H1 (cell line): ENCODE measurements at regions of chr1 and their contacts with region 1.

Region 1: GRCh38 chr1:209207701-209208286 is 375.7 kb upstream of the CAMK1G start:
- DNase-seq: peak; percentile 62 to 82
- H3K4me3 ChIP-seq: peak overlapping the region; percentile 24 to 61 (median 50); a peak in 6 of 8 replicates
- H3K27ac ChIP-seq: no peak overlapping the region
- H3K4me1 ChIP-seq: peaks cover 0 to 10% (median 5%) of the 10 kb centered on the region in 4 experiments; a peak in 6 of 7 replicates
- H3K27me3 ChIP-seq: peaks cover 0 to 7% (median 3%) of the 10 kb centered on the region in 4 experiments; a peak in 3 of 7 replicates
- CTCF ChIP-seq: peak; percentile 83 to 91 (median 89)
- EP300 ChIP-seq: no peak
- POLR2A ChIP-seq: no peak
- RAD21 ChIP-seq: peak; percentile 96

Region 2: DNA sequence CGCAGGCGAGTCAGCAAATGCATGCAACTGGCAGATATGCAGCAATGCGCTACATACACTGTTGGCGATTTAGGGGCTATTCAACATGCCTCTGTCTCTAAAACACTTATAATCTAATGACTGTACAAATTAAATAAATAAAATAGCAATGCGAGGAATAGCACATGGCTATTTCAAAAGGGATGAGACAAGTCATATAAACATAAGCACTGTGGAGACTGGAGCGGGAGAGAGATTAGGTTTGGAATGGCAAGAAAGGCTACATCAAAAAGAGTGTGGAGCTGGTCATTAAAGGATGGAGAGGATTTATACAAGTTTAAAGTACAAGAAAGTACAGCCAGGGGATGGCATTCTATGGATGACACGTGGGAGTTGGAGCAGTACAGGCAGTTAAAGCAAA is 147.8 kb before region 1 on chr1:
- CTCF ChIA-PET with region 1: interaction called, 13 read pairs
- POLR2A ChIA-PET with region 1: no interaction called
- DNase-seq: no peak
- H3K4me3 ChIP-seq: no peak overlapping the region
- H3K27ac ChIP-seq: no peak overlapping the region
- H3K4me1 ChIP-seq: peaks cover 0 to 4% (median 2%) of the 10 kb centered on the region in 4 experiments; a peak in 3 of 7 replicates
- H3K27me3 ChIP-seq: no peaks in the 10 kb centered on the region
- CTCF ChIP-seq: no peak
- EP300 ChIP-seq: no peak
- POLR2A ChIP-seq: no peak
- RAD21 ChIP-seq: no peak

Region 3: GRCh38 chr1:209095627-209096595 is 111.9 kb before region 1 on chr1:
- CTCF ChIA-PET with region 1: interaction called, 17 read pairs
- POLR2A ChIA-PET with region 1: no interaction called
- DNase-seq: no peak
- H3K4me3 ChIP-seq: no peak overlapping the region
- H3K27ac ChIP-seq: no peak overlapping the region
- H3K4me1 ChIP-seq: no peaks in the 10 kb centered on the region
- H3K27me3 ChIP-seq: peaks cover 0 to 1% (median 0%) of the 10 kb centered on the region in 4 experiments; a peak in 1 of 7 replicates
- CTCF ChIP-seq: no peak
- EP300 ChIP-seq: no peak
- POLR2A ChIP-seq: no peak
- RAD21 ChIP-seq: no peak

Region 4: DNA sequence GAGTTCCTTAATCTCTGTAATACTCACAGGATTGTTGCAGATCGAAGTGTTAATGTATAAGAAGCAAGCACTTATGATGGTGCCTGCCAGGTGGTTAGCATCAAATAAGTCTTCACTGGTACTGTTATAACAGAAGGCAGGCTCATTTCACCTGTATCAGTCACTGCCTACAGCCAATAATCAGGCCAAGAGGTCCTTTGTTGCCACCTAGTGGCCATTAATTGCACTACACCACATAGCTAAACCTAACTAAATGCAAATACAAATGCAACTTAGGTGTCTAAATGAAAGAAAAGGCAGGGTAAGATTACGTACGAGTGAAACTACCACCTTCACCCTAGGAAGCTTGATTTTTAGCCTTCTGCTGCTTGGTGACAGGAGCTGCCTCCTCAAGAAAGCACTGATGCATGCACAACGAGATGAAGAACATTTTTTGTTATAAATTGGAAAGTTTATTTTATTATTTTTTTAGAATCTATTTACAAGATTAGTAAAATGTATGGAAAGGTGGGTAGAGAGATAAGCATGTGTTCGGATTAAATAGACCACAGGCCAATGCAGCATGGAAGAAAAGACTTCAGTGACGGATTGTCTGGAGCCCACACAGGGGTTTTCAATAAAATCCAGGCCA is 41.0 kb after region 1 on chr1:
- CTCF ChIA-PET with region 1: interaction called, 70 read pairs
- POLR2A ChIA-PET with region 1: no interaction called
- DNase-seq: peak in 1 of 2 experiments; percentile 83
- H3K4me3 ChIP-seq: no peak overlapping the region
- H3K27ac ChIP-seq: no peak overlapping the region
- H3K4me1 ChIP-seq: peaks cover 0 to 16% (median 5%) of the 10 kb centered on the region in 4 experiments; a peak in 4 of 7 replicates
- H3K27me3 ChIP-seq: no peaks in the 10 kb centered on the region
- CTCF ChIP-seq: peak in 2 of 3 experiments; percentile 83 to 90; a peak in 3 of 4 replicates
- EP300 ChIP-seq: no peak
- POLR2A ChIP-seq: no peak
- RAD21 ChIP-seq: peak; percentile 86 to 91

Region 5: GRCh38 chr1:209435654-209436566 is 228.1 kb after region 1 on chr1:
- CTCF ChIA-PET with region 1: interaction called, 11 read pairs
- POLR2A ChIA-PET with region 1: no interaction called
- DNase-seq: peak; percentile 75 to 97
- H3K4me3 ChIP-seq: no peak overlapping the region
- H3K27ac ChIP-seq: no peak overlapping the region
- H3K4me1 ChIP-seq: peaks cover 8 to 29% (median 25%) of the 10 kb centered on the region in 4 experiments
- H3K27me3 ChIP-seq: no peaks in the 10 kb centered on the region
- CTCF ChIP-seq: peak; percentile 92 to 93 (median 93)
- EP300 ChIP-seq: 0 out of 3 replicates have a peak, but pooled peaks of 1 of the 2 experiments have one; percentile 14
- POLR2A ChIP-seq: no peak
- RAD21 ChIP-seq: peak; percentile 99

Region 6: DNA sequence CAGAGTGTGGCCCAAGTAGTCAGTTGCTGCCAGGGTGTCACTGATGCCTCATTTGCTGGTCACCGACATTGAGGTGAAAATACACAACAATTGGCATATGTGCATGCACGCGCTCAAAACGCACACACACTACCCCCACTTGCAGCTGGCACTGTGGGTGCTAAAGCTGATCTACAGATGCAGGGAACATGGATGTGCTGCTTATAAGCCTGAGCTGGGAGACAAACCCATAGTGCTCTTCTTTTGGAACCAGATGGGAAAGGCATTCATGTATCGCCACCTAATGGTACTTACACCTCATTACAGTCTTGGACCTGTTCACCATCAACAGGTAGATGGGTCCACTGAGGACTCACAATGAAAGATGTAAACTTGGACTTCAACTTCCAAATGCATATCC is 305.4 kb after region 1 on chr1:
- CTCF ChIA-PET with region 1: interaction called, 16 read pairs
- POLR2A ChIA-PET with region 1: no interaction called
- DNase-seq: peak in 1 of 2 experiments; percentile 50
- H3K4me3 ChIP-seq: no peak overlapping the region
- H3K27ac ChIP-seq: no peak overlapping the region
- H3K4me1 ChIP-seq: no peaks in the 10 kb centered on the region
- H3K27me3 ChIP-seq: no peaks in the 10 kb centered on the region
- CTCF ChIP-seq: peak in 2 of 3 experiments; percentile 75 to 94; a peak in 3 of 4 replicates
- EP300 ChIP-seq: no peak
- POLR2A ChIP-seq: no peak
- RAD21 ChIP-seq: peak; percentile 90 to 94